CD8-positive, alpha-beta T cell (primary cell): ENCODE measurements at regions of chr1 and their contacts with region 1.

Region 1: DNA sequence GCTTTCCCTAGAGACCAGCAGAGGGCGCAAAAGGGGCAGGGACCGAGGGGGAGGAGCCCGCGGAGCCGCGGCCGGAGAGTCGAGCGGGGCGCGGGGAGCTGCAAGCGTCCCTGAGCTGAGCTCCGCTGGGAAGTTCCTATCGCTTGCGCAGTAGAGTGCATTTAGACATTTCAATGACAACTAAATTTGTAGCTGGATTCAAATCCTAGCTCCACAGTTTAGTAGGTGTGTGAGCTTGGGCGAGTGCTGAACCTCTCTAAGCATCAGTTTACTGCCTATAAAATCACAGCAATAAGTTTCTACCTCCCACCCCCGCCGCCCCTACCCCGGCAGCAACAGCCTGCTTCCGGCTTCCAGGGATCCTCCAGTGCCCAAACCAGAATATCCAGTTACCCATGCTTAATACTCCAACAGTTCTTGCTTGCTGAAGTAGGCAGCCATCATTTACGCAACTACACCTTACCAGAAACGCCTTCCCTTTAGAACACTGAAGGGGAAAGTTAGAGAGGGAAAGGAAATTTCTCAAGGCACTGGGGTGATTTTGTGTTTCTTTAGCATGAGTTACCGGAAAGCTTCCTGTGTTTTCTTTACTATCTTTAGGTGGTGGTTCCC is 9.1 kb downstream of the TLR5 start:
- DNase-seq: peak; percentile 46 to 87 (median 79)
- ATAC-seq: peak; percentile 97
- H3K4me3 ChIP-seq: peak overlapping the region; percentile 22 to 28
- H3K4me3 Mint-ChIP-seq: peak overlapping the region; percentile 69
- H3K27ac ChIP-seq: no peak overlapping the region
- H3K27ac Mint-ChIP-seq: no peak overlapping the region
- H3K4me1 ChIP-seq: peaks cover 7% of the 10 kb centered on the region
- H3K4me1 Mint-ChIP-seq: peaks cover 15% of the 10 kb centered on the region
- H3K27me3 ChIP-seq: peaks cover 0 to 3% of the 10 kb centered on the region in 2 experiments
- H3K27me3 Mint-ChIP-seq: peaks cover 7% of the 10 kb centered on the region
- CTCF ChIP-seq: peak; percentile 85

Region 2: DNA sequence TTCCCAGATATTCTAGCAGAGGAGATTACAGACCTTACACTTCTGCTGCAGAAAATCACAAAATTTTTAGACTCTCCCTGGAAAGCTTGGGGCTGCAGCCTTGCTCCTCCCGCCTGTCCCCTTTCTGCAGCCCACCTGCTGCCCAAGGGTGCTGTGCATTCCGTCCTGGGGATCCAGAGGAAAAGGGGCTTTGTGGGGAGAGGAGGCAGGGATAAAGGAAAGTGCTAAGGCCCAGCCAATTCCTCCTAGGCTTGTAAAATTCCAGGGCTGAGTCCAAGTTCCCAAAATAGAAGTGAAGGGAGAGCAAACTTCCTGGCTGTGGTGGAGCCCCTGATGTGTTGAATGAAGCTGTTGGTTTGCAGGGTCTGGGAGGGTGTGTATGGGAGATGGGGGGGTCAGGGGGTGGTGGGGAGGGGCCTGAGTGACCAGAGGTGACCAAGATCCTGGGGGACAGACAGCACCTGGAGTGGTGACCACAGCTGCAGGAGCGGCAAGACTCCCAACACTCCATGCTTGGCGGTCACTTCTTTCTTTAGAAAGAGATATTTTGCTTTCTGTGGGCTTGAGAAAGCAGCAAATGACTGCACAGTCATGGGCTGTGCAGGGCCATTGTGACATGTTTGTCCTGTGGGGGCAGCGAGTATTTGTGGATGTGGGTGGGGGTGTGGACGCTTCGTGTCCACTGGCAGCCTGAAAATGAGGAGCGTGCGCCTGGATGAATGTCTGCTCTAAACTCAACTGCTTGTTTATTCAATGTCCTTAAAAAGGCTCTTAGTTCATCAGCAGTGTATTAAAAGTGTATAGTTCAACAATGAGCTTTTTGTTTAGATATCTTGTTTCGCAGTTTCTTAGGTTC is 59.3 kb before region 1 on chr1:
- CTCF ChIA-PET with region 1: no interaction called
- POLR2A ChIA-PET with region 1: no interaction called
- intact Hi-C with region 1: no loop called
- DNase-seq: no peak
- ATAC-seq: no peak
- H3K4me3 ChIP-seq: no peak overlapping the region
- H3K4me3 Mint-ChIP-seq: no peak overlapping the region
- H3K27ac ChIP-seq: no peak overlapping the region
- H3K27ac Mint-ChIP-seq: no peak overlapping the region
- H3K4me1 ChIP-seq: no peaks in the 10 kb centered on the region
- H3K4me1 Mint-ChIP-seq: no peaks in the 10 kb centered on the region
- H3K27me3 ChIP-seq: no peaks in the 10 kb centered on the region
- H3K27me3 Mint-ChIP-seq: peaks cover 7% of the 10 kb centered on the region
- CTCF ChIP-seq: no peak

Region 3: DNA sequence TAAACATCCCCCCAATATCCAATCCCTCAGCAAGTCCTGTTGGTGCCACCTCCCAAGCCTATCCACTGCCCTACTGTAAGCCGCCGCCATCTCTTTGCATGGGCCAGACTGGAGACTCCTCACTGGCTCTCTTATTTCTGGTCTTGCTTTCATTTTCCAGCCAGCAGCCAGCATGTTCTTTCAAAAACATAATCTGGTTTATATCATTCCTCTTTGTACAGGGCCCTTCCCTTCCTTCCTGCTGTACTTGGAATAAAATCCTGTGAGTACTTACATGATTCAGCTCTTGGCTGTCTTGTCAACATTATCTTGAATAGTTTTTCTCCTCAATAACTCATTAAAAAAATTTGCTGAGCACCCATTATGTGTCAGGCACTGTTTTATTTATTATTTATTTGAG is 19.1 kb before region 1 on chr1:
- CTCF ChIA-PET with region 1: interaction called, 60 read pairs
- POLR2A ChIA-PET with region 1: no interaction called
- intact Hi-C with region 1: no loop called
- DNase-seq: no peak
- ATAC-seq: no peak
- H3K4me3 ChIP-seq: no peak overlapping the region
- H3K4me3 Mint-ChIP-seq: no peak overlapping the region
- H3K27ac ChIP-seq: no peak overlapping the region
- H3K27ac Mint-ChIP-seq: no peak overlapping the region
- H3K4me1 ChIP-seq: no peaks in the 10 kb centered on the region
- H3K4me1 Mint-ChIP-seq: no peaks in the 10 kb centered on the region
- H3K27me3 ChIP-seq: no peaks in the 10 kb centered on the region
- H3K27me3 Mint-ChIP-seq: no peaks in the 10 kb centered on the region
- CTCF ChIP-seq: no peak

Region 4: GRCh38 chr1:223244366-223245103 is 110.6 kb after region 1 on chr1:
- CTCF ChIA-PET with region 1: interaction called, 21 read pairs
- POLR2A ChIA-PET with region 1: no interaction called
- intact Hi-C with region 1: loop called (anchors 1 to 2 kb)
- DNase-seq: peak in 6 of 9 experiments; percentile 30 to 69 (median 38)
- ATAC-seq: peak; percentile 48
- H3K4me3 ChIP-seq: no peak overlapping the region
- H3K4me3 Mint-ChIP-seq: no peak overlapping the region
- H3K27ac ChIP-seq: no peak overlapping the region
- H3K27ac Mint-ChIP-seq: no peak overlapping the region
- H3K4me1 ChIP-seq: peaks cover 32% of the 10 kb centered on the region
- H3K4me1 Mint-ChIP-seq: peaks cover 41% of the 10 kb centered on the region
- H3K27me3 ChIP-seq: no peaks in the 10 kb centered on the region
- H3K27me3 Mint-ChIP-seq: no peaks in the 10 kb centered on the region
- CTCF ChIP-seq: no peak

Region 5: GRCh38 chr1:223358826-223359225 is 224.9 kb after region 1 on chr1:
- CTCF ChIA-PET with region 1: interaction called, 12 read pairs
- POLR2A ChIA-PET with region 1: no interaction called
- intact Hi-C with region 1: loop called (anchors 1 to 2 kb)
- DNase-seq: peak in 2 of 9 experiments; percentile 7 to 26
- ATAC-seq: no peak
- H3K4me3 ChIP-seq: no peak overlapping the region
- H3K4me3 Mint-ChIP-seq: no peak overlapping the region
- H3K27ac ChIP-seq: no peak overlapping the region
- H3K27ac Mint-ChIP-seq: no peak overlapping the region
- H3K4me1 ChIP-seq: peaks cover 7% of the 10 kb centered on the region
- H3K4me1 Mint-ChIP-seq: peaks cover 14% of the 10 kb centered on the region
- H3K27me3 ChIP-seq: peaks cover 0 to 2% of the 10 kb centered on the region in 2 experiments
- H3K27me3 Mint-ChIP-seq: peaks cover 11% of the 10 kb centered on the region
- CTCF ChIP-seq: no peak

Region 6: GRCh38 chr1:223363856-223364684 is 230.1 kb after region 1 on chr1 and contains the start of gene SUSD4:
- CTCF ChIA-PET with region 1: interaction called, 12 read pairs
- POLR2A ChIA-PET with region 1: no interaction called
- intact Hi-C with region 1: loop called in 1 of 2 experiments (anchors 2 kb)
- DNase-seq: peak; percentile 41 to 86 (median 76)
- ATAC-seq: peak; percentile 90
- H3K4me3 ChIP-seq: peak within 1 kb of the TSS; percentile 48 to 70
- H3K4me3 Mint-ChIP-seq: peak within 1 kb of the TSS; percentile 89
- H3K27ac ChIP-seq: peak within 1 kb of the TSS in 1 of 2 experiments; percentile 35
- H3K27ac Mint-ChIP-seq: peak within 1 kb of the TSS; percentile 64
- H3K4me1 ChIP-seq: peaks cover 7% of the 10 kb centered on the region
- H3K4me1 Mint-ChIP-seq: peaks cover 20% of the 10 kb centered on the region
- H3K27me3 ChIP-seq: peaks cover 0 to 6% of the 10 kb centered on the region in 2 experiments
- H3K27me3 Mint-ChIP-seq: peaks cover 11% of the 10 kb centered on the region
- CTCF ChIP-seq: no peak
- total RNA-seq, gene SUSD4: 1.9 to 2.2 TPM

Region 7: DNA sequence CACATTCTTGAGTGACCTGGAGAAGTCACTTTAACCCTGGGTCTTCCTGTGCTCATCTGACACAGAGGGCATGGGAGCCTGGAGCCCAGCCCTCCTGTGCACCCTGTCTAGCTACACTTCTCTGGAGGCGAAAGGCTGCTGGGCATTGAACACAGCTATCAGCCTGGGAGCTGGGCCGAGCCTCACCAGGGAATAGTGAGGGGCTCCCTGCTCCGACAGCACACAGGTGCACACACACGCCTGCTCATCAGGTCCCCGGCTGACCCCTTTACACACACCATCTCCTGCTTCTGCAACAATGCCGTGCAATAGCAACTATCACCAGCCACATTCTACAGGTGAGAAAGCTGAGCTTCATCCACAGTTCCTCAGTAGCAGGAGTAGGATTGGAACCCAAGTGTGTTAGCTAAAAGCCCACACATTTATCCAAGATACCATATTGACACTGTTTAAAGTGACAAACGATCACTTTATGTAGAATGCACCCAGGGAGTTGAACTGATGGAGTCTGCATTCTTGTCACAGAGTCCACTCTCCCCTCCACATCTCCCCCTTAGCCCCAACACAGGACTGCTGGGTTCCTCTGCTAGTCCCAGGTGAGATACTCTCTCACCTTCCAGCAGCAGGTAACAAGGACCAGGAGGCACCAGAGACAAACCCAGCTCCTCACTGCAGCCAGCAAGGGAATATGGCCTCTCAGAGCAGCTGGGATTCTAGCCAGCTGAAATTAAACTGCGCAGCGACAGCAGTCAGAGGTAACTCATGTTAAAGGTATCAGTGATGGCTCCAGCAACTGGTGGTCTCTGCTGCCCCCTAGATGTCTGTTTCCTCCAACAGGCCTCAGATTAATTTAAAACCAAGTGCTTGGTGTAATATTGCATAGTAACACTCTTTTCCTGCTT is 549.9 kb after region 1 on chr1:
- CTCF ChIA-PET with region 1: interaction called, 90 read pairs
- POLR2A ChIA-PET with region 1: no interaction called
- intact Hi-C with region 1: loop called in 1 of 2 experiments (anchors 1 kb)
- DNase-seq: peak; percentile 44 to 75 (median 67)
- ATAC-seq: peak; percentile 51
- H3K4me3 ChIP-seq: no peak overlapping the region
- H3K4me3 Mint-ChIP-seq: no peak overlapping the region
- H3K27ac ChIP-seq: no peak overlapping the region
- H3K27ac Mint-ChIP-seq: no peak overlapping the region
- H3K4me1 ChIP-seq: no peaks in the 10 kb centered on the region
- H3K4me1 Mint-ChIP-seq: peaks cover 3% of the 10 kb centered on the region
- H3K27me3 ChIP-seq: no peaks in the 10 kb centered on the region
- H3K27me3 Mint-ChIP-seq: peaks cover 13% of the 10 kb centered on the region
- CTCF ChIP-seq: peak; percentile 69

Region 8: DNA sequence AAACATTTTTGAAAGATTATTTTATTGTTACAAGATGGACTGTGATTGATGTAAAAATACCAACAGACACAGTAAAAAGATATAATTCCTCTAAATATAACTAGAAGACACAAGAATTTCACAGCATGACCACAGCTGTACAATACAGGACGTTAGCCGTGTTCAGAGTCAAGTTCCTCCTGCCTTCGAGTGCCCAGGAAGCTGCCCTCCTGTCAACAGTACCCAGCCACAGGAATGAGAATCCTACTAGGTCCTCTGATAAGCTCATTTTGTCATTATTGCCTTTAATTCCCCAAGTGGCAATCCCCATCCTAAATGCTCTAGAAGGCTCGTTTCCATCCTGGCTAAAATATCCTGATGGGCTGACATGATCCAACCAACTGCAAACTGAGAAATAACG is 562.0 kb after region 1 on chr1:
- CTCF ChIA-PET with region 1: interaction called, 10 read pairs
- POLR2A ChIA-PET with region 1: no interaction called
- intact Hi-C with region 1: no loop called
- DNase-seq: no peak
- ATAC-seq: no peak
- H3K4me3 ChIP-seq: no peak overlapping the region
- H3K4me3 Mint-ChIP-seq: no peak overlapping the region
- H3K27ac ChIP-seq: no peak overlapping the region
- H3K27ac Mint-ChIP-seq: no peak overlapping the region
- H3K4me1 ChIP-seq: peaks cover 7% of the 10 kb centered on the region
- H3K4me1 Mint-ChIP-seq: peaks cover 6% of the 10 kb centered on the region
- H3K27me3 ChIP-seq: no peaks in the 10 kb centered on the region
- H3K27me3 Mint-ChIP-seq: no peaks in the 10 kb centered on the region
- CTCF ChIP-seq: no peak